ENCODE measurements at regions of chr7 and their contacts with region 1.

Region 1: GRCh38 chr7:22559829-22560489 is 60.0 kb upstream of the STEAP1B start:
- DNase-seq: peak; percentile 77
- H3K4me3 Mint-ChIP-seq: no peak overlapping the region
- H3K27ac Mint-ChIP-seq: no peak overlapping the region
- H3K4me1 Mint-ChIP-seq: peaks cover 39% of the 10 kb centered on the region
- H3K27me3 Mint-ChIP-seq: peaks cover 9% of the 10 kb centered on the region

Region 2: GRCh38 chr7:22640269-22640668 is 80.3 kb after region 1 on chr7:
- CTCF ChIA-PET with region 1: interaction called, 10 read pairs
- POLR2A ChIA-PET with region 1: interaction called, 4 read pairs
- intact Hi-C with region 1: loop called (anchors 1 kb)
- DNase-seq: peak; percentile 78
- H3K4me3 Mint-ChIP-seq: no peak overlapping the region
- H3K27ac Mint-ChIP-seq: no peak overlapping the region
- H3K4me1 Mint-ChIP-seq: peaks cover 20% of the 10 kb centered on the region
- H3K27me3 Mint-ChIP-seq: peaks cover 26% of the 10 kb centered on the region

Region 3: GRCh38 chr7:22675917-22676343 is 116.0 kb after region 1 on chr7:
- CTCF ChIA-PET with region 1: interaction called, 13 read pairs
- POLR2A ChIA-PET with region 1: interaction called, 3 read pairs
- intact Hi-C with region 1: loop called (anchors 1 kb)
- DNase-seq: peak; percentile 61
- H3K4me3 Mint-ChIP-seq: no peak overlapping the region
- H3K27ac Mint-ChIP-seq: peak overlapping the region; percentile 47
- H3K4me1 Mint-ChIP-seq: peaks cover 75% of the 10 kb centered on the region
- H3K27me3 Mint-ChIP-seq: no peaks in the 10 kb centered on the region

Region 4: GRCh38 chr7:22697876-22698606 is 138.1 kb after region 1 on chr7:
- CTCF ChIA-PET with region 1: interaction called, 18 read pairs
- POLR2A ChIA-PET with region 1: interaction called, 3 read pairs
- intact Hi-C with region 1: loop called (anchors 1 kb)
- DNase-seq: peak; percentile 36
- H3K4me3 Mint-ChIP-seq: peak overlapping the region; percentile 13
- H3K27ac Mint-ChIP-seq: peak overlapping the region; percentile 85
- H3K4me1 Mint-ChIP-seq: peaks cover 66% of the 10 kb centered on the region
- H3K27me3 Mint-ChIP-seq: peaks cover 2% of the 10 kb centered on the region

Region 5: DNA sequence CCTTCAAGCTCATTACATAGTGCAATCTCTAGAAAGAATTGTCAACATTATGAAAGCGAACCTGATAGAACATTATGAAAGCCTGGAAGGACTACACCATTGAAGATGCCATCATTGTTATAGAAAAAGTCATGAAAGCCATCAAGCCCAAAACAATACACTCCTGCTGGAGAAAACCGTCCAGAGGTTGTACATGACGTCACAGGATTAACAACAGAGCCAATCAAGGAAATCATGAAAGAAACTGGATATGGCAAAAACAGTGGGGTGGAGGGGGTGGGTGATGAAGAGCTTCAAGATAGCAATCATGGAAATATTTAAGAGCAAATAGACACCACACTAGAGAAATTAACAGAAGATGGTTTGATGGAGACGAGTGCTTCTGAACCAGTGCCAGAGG is 217.0 kb after region 1 on chr7:
- CTCF ChIA-PET with region 1: interaction called, 152 read pairs
- POLR2A ChIA-PET with region 1: no interaction called
- intact Hi-C with region 1: loop called (anchors 1 kb)
- DNase-seq: no peak
- H3K4me3 Mint-ChIP-seq: no peak overlapping the region
- H3K27ac Mint-ChIP-seq: no peak overlapping the region
- H3K4me1 Mint-ChIP-seq: no peaks in the 10 kb centered on the region
- H3K27me3 Mint-ChIP-seq: peaks cover 3% of the 10 kb centered on the region

Region 6: DNA sequence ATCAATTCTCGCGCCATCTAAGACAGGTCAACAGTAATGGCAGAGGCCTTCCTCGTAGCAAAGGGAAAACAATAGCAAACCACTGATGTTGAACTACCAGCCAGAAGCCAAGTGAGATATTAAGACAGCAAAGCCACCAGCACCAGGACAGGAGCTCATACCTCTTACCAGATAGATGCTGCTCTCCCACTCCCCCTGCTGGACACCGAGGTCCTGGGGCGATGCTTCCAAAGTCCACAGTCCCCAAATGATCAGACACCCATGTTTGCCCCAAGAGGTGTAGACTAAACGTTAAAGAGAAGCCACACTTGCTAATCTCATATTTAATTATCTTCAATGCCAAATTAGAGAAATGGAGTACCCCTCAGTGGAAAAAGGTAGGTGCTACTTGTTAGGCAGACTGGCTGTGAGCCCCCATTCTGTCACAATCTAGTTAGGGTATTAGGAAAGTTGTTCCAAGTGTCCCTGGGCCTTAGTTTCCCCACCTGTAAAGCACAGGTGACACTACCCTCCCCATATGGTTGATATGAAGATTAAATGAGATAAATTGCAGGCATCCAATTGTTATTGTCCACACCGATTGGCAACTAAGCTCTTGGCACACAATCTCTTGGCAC is 222.8 kb after region 1 on chr7:
- CTCF ChIA-PET with region 1: interaction called, 152 read pairs
- POLR2A ChIA-PET with region 1: no interaction called
- intact Hi-C with region 1: loop called (anchors 1 kb)
- DNase-seq: peak; percentile 82
- H3K4me3 Mint-ChIP-seq: no peak overlapping the region
- H3K27ac Mint-ChIP-seq: no peak overlapping the region
- H3K4me1 Mint-ChIP-seq: no peaks in the 10 kb centered on the region
- H3K27me3 Mint-ChIP-seq: no peaks in the 10 kb centered on the region

Region 7: DNA sequence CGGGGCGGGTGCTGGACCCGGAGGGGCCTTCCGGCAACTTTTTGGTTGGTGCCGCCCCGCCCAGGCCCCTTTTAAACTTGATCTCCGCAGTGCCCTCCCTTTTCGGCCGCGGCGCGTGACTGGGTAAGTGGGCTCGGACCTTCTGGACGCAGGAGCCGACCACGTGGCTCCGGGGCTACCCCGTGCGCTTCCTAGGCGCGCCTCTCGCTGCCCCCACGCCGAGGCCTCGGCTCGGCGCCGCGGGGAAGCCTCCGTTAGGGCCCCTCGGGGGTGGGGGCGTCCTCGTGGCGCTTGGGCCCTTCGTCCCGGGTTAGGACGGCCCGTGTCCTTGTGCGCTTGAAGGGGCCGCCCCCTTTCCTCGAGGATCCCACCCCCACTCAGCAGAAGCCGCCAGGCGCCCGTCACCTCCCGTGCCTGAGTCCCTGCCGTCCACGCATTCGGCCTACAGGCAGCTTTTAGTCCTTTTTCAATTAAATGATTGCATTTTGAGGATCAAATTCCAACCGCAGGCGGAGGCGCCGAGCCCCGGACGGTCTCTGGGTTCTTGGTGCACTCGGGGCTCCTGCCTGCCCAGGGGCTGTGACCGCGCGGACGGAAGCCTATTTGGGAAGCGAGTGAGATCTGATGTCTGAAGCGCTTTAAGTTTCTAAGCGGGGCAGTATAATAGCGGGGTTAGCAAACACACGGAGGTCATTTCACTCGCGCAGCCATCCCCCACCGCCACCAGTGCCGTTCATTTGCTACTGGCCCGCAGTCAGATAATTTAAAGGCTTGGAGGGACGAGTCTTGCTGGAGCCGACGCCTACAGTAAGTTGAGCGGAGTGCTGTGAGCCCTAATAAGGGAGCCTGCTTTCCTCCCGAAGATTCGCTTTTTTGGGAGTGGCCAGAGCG is 294.4 kb after region 1 on chr7:
- CTCF ChIA-PET with region 1: interaction called, 4 read pairs
- POLR2A ChIA-PET with region 1: no interaction called
- intact Hi-C with region 1: loop called (anchors 2 kb)
- DNase-seq: no peak
- H3K4me3 Mint-ChIP-seq: peak overlapping the region; percentile 93
- H3K27ac Mint-ChIP-seq: peak overlapping the region; percentile 93
- H3K4me1 Mint-ChIP-seq: peaks cover 34% of the 10 kb centered on the region
- H3K27me3 Mint-ChIP-seq: peaks cover 2% of the 10 kb centered on the region

Region 8: GRCh38 chr7:22962775-22963358 is 402.9 kb after region 1 on chr7:
- CTCF ChIA-PET with region 1: no interaction called
- POLR2A ChIA-PET with region 1: no interaction called
- intact Hi-C with region 1: no loop called
- DNase-seq: no peak
- H3K4me3 Mint-ChIP-seq: no peak overlapping the region
- H3K27ac Mint-ChIP-seq: no peak overlapping the region
- H3K4me1 Mint-ChIP-seq: no peaks in the 10 kb centered on the region
- H3K27me3 Mint-ChIP-seq: no peaks in the 10 kb centered on the region

Measured in activated CD4-positive, alpha-beta memory T cell treated with anti-CD3 and anti-CD28 coated beads for 36 hours (primary cell).